MCF 10A (cell line): ENCODE measurements at regions of chr17 and their contacts with region 1.

Region 1: DNA sequence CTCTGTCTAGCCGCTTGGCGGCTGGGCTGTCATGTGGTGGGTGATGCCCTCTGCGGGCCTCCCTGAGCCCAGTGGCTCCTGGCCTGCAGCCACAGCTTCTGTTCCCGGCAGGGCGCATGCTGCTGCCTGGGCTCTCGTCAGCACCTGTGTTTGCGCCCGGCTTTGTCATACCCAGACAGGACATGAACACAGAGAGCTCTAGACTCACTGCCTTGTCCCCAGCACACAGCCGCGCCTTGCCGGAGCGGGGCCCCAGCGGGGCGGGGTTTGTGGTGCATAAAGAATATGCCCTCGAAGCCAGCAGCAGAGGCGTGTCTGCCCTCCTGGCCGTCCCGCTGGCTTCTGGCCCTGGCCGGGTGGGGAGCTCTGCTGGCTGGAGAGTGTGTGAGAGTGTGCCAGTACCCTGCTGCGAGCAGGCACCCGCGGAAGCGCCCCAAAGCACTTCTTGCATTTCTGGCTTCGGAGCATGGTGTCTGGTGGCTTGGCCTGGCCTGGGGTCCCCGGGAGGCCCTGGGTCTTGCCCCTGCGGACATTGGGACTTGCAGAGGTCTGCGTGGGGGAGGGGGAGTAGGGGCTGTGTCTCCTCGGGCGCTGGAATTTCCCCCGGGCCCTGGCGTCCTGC is 14.4 kb downstream of the ASPSCR1 start:
- DNase-seq: peak; percentile 92
- H3K4me3 Mint-ChIP-seq: peak overlapping the region; percentile 56
- H3K27ac Mint-ChIP-seq: peak overlapping the region; percentile 31
- H3K4me1 Mint-ChIP-seq: peaks cover 13% of the 10 kb centered on the region
- H3K27me3 Mint-ChIP-seq: no peaks in the 10 kb centered on the region
- CTCF ChIP-seq: no peak

Region 2: DNA sequence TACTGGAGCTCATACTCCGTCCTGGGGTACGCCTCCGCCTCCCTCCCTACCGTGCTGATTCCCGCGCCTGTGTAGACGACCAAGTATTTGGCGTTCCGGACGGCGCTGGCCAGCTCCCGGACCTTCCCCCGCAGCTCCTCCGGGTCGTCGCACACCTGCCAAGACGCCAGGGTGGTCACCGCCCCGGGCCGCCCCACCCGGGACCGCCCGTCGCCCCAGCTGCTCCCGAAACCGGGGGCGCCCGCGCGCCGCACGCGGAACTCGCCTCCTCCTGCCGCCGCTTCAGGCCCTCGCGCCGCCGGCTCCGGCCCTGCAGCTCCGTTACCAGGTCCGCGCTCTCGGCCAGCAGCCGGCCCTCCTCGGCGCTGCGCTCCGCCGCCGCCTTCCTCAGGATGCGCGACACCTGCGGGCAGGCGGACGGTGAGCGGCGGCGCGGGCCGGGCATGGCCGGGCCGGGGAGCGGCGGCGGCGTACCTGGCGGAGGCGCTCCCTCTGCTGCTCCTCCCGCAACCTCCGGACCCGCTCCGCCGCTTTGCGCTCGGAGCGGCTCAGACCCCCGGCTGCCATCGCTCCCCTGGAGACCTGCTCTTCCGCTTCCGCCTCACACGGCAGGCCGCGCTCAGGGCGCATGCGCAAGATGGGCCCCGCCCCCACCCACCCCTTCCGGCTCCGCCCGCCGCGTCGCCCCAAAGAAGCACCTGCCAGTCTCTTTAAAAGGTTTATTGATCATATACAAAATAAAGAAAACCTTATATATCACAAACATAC is 74.0 kb before region 1 on chr17 and contains the start of gene SIRT7:
- CTCF ChIA-PET with region 1: no interaction called
- POLR2A ChIA-PET with region 1: interaction called, 10 read pairs
- intact Hi-C with region 1: no loop called
- DNase-seq: peak; percentile 75
- H3K4me3 Mint-ChIP-seq: peak within 1 kb of the TSS; percentile 87
- H3K27ac Mint-ChIP-seq: peak within 1 kb of the TSS; percentile 87
- H3K4me1 Mint-ChIP-seq: peaks cover 27% of the 10 kb centered on the region
- H3K27me3 Mint-ChIP-seq: no peaks in the 10 kb centered on the region
- CTCF ChIP-seq: no peak
- total RNA-seq, gene SIRT7: 36.6 and 44.8 TPM in 2 replicates

Region 3: DNA sequence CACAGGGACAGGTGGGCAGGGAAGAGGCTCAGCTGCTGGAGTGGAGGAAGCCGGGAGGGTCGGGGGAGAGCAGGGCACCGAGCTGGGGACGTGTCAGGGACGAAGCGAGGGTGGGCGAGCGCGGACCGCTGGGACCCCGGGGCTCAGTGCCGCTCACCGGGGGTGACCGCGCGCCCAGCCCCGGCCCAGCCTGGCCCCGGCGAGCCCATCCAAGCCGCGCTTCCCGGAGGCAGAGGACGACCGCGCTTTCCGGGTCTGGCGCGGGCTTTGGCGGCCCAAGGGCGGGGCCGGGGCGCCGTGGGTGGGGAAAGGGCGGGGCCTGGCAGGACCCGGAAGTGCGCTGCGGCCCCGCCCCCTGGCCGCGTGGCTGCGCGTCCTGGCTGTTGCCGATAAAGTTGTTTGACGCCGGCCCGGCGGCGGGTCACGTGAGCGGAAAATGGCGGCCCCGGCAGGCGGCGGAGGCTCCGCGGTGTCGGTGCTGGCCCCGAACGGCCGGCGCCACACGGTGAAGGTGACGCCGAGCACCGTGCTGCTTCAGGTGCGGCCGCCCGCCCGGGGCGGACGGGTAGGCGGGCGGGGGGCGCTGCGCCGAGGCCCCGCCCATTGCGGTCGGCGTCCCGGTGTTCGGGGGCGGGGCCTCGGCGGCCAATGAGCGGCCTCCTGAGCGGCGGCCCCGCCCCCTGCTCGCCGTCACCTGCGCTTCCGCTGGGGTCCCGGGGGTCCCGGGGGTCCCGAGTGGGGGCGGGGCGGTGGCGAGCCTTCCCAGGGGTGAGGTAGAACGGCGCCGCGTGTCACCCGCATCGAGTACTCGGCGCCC is 14.4 kb before region 1 on chr17 and contains the start of gene ASPSCR1:
- CTCF ChIA-PET with region 1: interaction called, 5 read pairs
- POLR2A ChIA-PET with region 1: interaction called, 55 read pairs
- intact Hi-C with region 1: no loop called
- DNase-seq: peak; percentile 85
- H3K4me3 Mint-ChIP-seq: peak within 1 kb of the TSS; percentile 97
- H3K27ac Mint-ChIP-seq: peak within 1 kb of the TSS; percentile 88
- H3K4me1 Mint-ChIP-seq: peaks cover 25% of the 10 kb centered on the region
- H3K27me3 Mint-ChIP-seq: no peaks in the 10 kb centered on the region
- CTCF ChIP-seq: no peak
- total RNA-seq, gene ASPSCR1: 24.9 and 29.7 TPM in 2 replicates

Region 4: DNA sequence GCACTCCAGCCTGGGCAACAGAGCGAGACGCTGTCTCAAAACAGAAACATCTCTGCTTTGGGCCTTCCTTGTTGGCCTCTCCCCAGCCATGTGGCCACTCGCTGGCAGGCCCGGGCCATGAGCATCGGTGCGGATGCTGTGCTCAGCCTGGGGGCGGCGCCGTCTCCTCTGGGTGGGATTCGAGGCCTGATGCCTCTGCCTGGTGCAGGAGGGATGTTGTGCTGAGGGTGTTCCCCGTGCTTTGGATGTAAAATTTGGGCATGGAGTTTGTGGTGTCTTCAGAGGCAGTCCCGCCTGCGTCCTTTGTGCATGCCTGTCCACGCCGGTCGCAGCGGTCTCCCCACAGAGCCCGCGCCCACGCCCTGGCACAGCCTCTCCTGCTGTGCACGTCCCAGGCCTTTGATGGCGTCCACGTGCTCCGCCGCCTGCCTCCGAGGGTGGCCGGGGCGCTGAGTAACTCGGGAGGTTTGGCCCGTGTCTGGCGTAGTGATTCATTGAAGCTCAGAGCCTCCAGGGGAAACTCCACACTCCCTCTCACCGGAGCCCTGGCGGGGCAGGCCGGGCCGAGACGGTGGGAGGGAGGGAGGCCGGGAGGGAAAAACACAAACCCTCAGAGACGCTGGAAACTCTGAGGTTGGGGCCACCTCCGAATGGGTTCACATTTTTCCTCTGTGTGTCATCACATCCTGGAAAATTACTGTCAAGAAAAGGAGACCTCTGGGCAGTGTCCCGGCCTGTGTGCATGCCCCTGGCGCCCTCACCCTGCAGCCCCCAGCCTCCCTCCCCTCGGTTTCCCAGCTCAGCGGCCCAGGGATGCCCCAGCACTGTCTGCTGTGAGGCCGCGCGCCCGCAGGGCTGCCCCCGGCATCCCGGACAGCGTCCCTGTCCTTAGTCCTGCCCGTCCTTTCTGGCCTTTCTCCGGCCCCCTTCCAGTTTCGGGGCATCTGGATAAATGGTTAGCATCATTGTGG is 11.9 kb after region 1 on chr17:
- CTCF ChIA-PET with region 1: interaction called, 3 read pairs
- POLR2A ChIA-PET with region 1: interaction called, 31 read pairs
- intact Hi-C with region 1: no loop called
- DNase-seq: peak; percentile 95
- H3K4me3 Mint-ChIP-seq: no peak overlapping the region
- H3K27ac Mint-ChIP-seq: no peak overlapping the region
- H3K4me1 Mint-ChIP-seq: peaks cover 10% of the 10 kb centered on the region
- H3K27me3 Mint-ChIP-seq: no peaks in the 10 kb centered on the region
- CTCF ChIP-seq: no peak

Region 5: DNA sequence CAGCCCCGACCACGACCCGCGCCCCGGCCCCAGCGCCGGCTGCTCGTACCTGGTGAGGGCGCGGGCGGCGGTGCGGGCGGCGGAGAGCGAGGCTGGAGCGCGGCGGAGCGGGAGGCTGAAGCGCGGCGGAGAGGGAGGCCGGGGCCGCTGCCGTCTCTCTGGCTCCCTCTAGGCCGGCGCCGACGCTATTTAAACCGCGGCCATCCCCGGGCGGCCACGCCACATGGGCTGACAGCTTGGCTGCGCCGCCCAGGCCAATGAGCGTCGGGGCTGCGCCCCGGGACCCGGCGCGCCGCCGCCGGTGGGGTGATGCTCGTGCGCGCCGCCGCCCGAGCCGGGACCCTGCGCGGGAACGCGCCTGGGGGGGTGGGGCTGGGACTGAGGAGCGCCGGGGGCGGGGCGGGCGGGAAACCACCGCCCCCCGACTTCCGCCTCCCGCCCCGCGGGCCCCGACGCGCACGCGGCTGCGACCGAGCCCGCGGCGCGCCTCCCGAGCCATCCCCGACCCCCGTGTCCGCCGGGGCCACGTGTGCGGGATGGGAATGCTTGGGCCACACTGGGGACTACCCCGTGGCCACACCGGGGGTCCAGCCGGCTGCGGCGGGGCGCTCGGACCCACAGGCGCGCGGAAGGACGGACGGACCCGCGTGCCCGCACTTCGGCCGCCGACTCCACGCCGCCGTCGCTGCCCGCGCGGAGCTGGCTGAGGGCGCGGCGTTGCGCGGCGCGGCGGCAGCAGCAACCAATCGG is 106.5 kb after region 1 on chr17 and contains the start of gene FASN:
- CTCF ChIA-PET with region 1: no interaction called
- POLR2A ChIA-PET with region 1: no interaction called
- intact Hi-C with region 1: no loop called
- DNase-seq: peak; percentile 94
- H3K4me3 Mint-ChIP-seq: peak within 1 kb of the TSS; percentile 75
- H3K27ac Mint-ChIP-seq: peak within 1 kb of the TSS; percentile 66
- H3K4me1 Mint-ChIP-seq: no peaks in the 10 kb centered on the region
- H3K27me3 Mint-ChIP-seq: no peaks in the 10 kb centered on the region
- CTCF ChIP-seq: peak; percentile 32
- total RNA-seq, gene FASN: 114 and 120 TPM in 2 replicates